Activated T-helper 1 cell treated with anti-CD3 and anti-CD28 coated beads, Interleukin-12 subunit alpha, Interleukin-12 subunit beta, Interleukin-2, Interleukin-4 antibody, amounts not matched to agents 30 ng/mL and 10 ng/mL and 1 ng/mL, durations not matched to agents 14 hours and 24 hours and 36 hours (primary cell): ENCODE measurements at regions of chr5 and their contacts with region 1.

Region 1: DNA sequence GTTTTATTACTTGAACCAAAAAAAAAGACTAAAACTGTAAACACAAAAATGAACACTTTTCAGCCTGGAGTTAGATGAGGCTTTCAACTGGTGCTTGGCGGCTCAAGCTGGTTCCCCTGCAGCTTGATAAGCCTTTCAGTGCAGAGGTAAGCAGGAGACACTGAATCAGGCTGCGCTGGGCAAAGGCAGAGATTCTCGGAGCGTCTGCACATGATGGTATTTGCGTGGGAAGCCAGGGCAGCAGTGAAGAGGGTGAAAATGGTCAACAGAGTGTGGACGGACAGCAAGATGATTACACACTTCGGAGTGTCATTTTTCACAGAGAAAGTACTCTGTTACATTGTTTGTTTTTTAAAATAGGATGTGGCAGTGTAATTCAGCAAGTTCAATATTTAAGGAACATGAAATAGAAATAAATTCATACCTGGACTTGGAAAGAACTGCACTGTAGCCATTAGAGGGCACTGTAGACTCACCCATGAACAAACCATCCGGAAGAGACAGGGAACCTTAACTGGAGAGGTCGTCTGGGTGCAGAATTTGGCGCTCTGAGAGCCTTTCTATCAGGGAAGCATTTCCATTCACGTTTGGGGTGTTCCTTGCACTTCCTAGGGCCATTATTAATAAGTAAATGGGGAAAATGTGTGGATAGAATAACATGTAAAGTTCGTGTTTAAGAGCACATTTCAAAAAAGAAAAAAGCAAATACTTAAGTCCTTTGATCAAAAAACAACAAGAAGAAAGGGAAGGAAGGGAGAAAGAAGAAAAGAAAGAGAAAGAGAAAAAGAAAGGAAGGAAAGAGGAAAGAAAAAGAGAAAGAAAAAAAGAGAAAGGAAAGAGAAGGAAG is 69.8 kb downstream of the ICE1 start:
- DNase-seq: peak; percentile 37
- H3K4me3 Mint-ChIP-seq: peak overlapping the region; percentile 72
- H3K27ac Mint-ChIP-seq: no peak overlapping the region
- H3K4me1 Mint-ChIP-seq: peaks cover 16% of the 10 kb centered on the region
- H3K27me3 Mint-ChIP-seq: peaks cover 15% of the 10 kb centered on the region

Region 2: GRCh38 chr5:5421961-5422818 is 70.1 kb before region 1 on chr5 and contains the start of gene ICE1:
- intact Hi-C with region 1: loop called (anchors 1 kb)
- DNase-seq: peak; percentile 91
- H3K4me3 Mint-ChIP-seq: peak within 1 kb of the TSS; percentile 96
- H3K27ac Mint-ChIP-seq: peak within 1 kb of the TSS; percentile 98
- H3K4me1 Mint-ChIP-seq: peaks cover 18% of the 10 kb centered on the region
- H3K27me3 Mint-ChIP-seq: no peaks in the 10 kb centered on the region
- total RNA-seq, gene ICE1: 35.3 and 38.2 TPM in 2 replicates

Region 3: GRCh38 chr5:5523066-5523505 is 30.8 kb after region 1 on chr5:
- intact Hi-C with region 1: loop called (anchors 1 kb)
- DNase-seq: peak; percentile 43
- H3K4me3 Mint-ChIP-seq: peak overlapping the region; percentile 22
- H3K27ac Mint-ChIP-seq: peak overlapping the region; percentile 61
- H3K4me1 Mint-ChIP-seq: peaks cover 32% of the 10 kb centered on the region
- H3K27me3 Mint-ChIP-seq: no peaks in the 10 kb centered on the region

Region 4: DNA sequence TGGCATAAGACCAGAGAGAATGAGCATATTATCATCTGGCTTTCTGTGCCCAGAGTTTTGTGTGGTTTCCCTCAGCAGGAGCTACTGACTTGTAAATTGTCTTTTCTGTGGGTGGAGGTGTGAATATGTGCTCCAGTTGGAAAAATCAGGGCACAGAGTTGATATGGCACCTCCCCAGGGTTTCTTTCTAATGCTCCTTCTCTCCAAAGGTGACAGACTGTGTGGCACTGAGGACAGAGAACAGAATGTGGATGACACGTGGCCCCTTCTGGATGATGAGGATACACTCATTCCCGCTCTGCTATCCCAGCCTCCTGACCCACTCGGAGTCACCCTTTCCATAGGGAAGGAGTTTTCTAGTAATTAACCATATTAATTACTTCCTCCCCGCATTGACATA is 151.2 kb after region 1 on chr5:
- intact Hi-C with region 1: loop called (anchors 2 kb)
- DNase-seq: no peak
- H3K4me3 Mint-ChIP-seq: no peak overlapping the region
- H3K27ac Mint-ChIP-seq: no peak overlapping the region
- H3K4me1 Mint-ChIP-seq: no peaks in the 10 kb centered on the region
- H3K27me3 Mint-ChIP-seq: peaks cover 7% of the 10 kb centered on the region

Region 5: DNA sequence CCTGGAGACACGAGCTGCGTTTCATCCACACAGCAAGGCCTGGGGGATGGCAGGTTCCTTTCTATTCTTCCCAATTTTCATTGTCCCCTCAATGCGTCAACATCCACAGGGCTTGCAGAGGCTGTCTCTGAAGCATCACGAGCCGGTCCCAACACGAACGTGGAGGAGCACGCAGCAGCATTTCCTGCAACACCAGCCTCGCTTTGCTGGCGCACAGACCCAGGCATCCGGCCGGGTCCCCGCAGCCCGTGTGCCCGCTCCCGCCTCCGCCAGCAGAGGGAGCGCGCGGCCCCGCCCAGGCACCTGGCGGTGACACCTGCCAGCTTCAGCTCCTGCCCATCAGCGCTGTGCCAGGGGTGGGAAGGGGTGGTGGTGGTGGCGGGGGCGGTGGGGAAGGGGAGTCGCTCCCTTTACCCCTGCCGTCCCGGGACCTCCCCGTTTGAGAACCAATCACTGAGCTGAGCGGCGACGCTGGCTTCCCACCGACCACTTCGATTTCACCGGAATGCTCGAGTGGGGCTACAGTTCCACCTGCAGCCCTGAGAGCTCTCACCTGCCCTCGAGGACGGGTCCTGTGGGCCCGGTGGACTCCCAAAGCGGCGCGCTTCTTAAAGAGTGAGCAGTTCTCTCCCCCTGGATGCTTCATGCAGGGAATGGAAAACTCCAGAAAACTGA is 394.6 kb after region 1 on chr5:
- intact Hi-C with region 1: loop called (anchors 5 kb)
- DNase-seq: peak; percentile 41
- H3K4me3 Mint-ChIP-seq: no peak overlapping the region
- H3K27ac Mint-ChIP-seq: no peak overlapping the region
- H3K4me1 Mint-ChIP-seq: no peaks in the 10 kb centered on the region
- H3K27me3 Mint-ChIP-seq: no peaks in the 10 kb centered on the region

Region 6: DNA sequence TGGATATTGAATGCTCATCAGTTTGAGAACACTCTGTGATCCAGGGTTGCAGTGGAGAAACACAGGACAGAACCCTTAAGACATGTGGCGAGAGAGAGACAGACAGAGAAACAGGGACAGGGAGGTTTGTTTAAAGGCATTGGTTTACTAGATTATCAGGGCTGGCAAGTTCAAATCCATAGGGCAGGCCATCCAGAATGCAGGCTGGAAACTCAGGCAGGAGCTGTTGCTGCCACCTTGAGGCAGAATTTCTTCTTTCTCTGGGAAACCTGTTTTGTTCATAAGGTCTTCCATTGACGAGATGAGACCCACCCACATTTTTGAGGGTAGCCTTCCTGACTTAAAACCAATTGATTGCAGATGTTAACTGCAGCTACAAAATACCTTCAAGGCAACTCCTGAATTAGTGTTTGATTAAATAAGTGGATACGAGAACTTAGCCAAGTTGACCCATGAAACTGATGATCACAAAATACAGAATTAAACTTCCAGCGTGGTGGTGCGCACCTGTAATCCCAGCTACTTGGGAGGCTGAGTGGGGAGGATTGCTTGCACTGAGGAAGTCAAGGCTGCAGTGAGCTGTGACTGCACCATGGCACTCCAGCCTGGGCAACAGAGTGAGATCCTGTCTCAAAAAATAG is 1084.7 kb after region 1 on chr5:
- intact Hi-C with region 1: loop called (anchors 1 kb)
- DNase-seq: no peak
- H3K4me3 Mint-ChIP-seq: no peak overlapping the region
- H3K27ac Mint-ChIP-seq: no peak overlapping the region
- H3K4me1 Mint-ChIP-seq: peaks cover 6% of the 10 kb centered on the region
- H3K27me3 Mint-ChIP-seq: peaks cover 25% of the 10 kb centered on the region

Region 7: GRCh38 chr5:6632917-6633468 is 1140.7 kb after region 1 on chr5 and contains the starts of genes NSUN2 and SRD5A1:
- intact Hi-C with region 1: loop called (anchors 5 kb)
- DNase-seq: peak; percentile 90
- H3K4me3 Mint-ChIP-seq: peak within 1 kb of the TSS; percentile 98
- H3K27ac Mint-ChIP-seq: peak within 1 kb of the TSS; percentile 97
- H3K4me1 Mint-ChIP-seq: peaks cover 57% of the 10 kb centered on the region
- H3K27me3 Mint-ChIP-seq: no peaks in the 10 kb centered on the region
- total RNA-seq, gene NSUN2: 146 and 149 TPM in 2 replicates
- total RNA-seq, gene SRD5A1: 13.8 and 14.0 TPM in 2 replicates